SK-N-SH (cell line): ENCODE measurements at regions of chr2 and their contacts with region 1.

Region 1: GRCh38 chr2:205721057-205721449 is 38.8 kb downstream of the NRP2 start:
- DNase-seq: no peak
- H3K4me3 ChIP-seq: no peak overlapping the region
- H3K27ac ChIP-seq: no peak overlapping the region
- H3K4me1 ChIP-seq: peaks cover 3 to 10% of the 10 kb centered on the region in 2 experiments; a peak in 1 of 4 replicates
- H3K27me3 ChIP-seq: no peaks in the 10 kb centered on the region
- CTCF ChIP-seq: peak; percentile 52
- EP300 ChIP-seq: no peak
- RAD21 ChIP-seq: 0 out of 2 replicates have a peak, but pooled peaks have one; percentile 8

Region 2: DNA sequence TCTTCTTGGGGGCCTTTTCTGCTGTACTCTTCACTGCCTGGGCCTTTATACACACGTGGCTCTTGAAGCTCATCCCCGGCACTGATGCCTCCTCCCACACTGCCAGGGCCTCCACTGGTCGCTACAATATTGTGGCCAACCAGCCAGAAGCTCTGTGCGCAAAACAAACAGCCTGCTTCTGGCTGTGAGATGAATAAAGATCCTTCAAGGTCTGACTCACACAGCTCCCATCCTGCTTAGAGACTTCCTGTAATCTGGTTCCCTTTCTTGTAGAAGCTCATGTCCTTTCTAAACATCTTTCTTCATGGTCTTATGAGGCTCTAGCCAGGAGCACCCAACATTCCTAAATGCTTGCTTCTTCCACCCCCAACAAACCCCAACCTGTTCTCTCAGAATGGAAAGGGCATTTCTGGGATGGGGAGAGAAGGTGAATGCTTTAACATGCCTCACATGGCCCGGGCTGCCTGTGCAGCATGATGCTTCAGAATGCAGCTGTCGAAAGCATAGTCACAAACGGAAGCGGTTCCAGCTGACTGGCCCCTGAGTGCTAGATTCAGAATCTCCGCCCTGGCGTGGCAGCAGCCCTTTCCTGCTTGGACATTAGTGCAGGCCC is 14.2 kb before region 1 on chr2:
- CTCF ChIA-PET with region 1: interaction called, 18 read pairs
- POLR2A ChIA-PET with region 1: no interaction called
- DNase-seq: no peak
- H3K4me3 ChIP-seq: peak overlapping the region in 1 of 2 experiments; percentile 13; a peak in 1 of 4 replicates
- H3K27ac ChIP-seq: peak overlapping the region; percentile 36 to 87; a peak in 3 of 4 replicates
- H3K4me1 ChIP-seq: peaks cover 2 to 51% of the 10 kb centered on the region in 2 experiments; a peak in 3 of 4 replicates
- H3K27me3 ChIP-seq: no peaks in the 10 kb centered on the region
- CTCF ChIP-seq: no peak
- EP300 ChIP-seq: no peak; a peak in 1 of 4 replicates
- RAD21 ChIP-seq: no peak

Region 3: GRCh38 chr2:205734436-205735037 is 13.5 kb after region 1 on chr2:
- CTCF ChIA-PET with region 1: interaction called, 35 read pairs
- POLR2A ChIA-PET with region 1: no interaction called
- DNase-seq: peak; percentile 57
- H3K4me3 ChIP-seq: no peak overlapping the region
- H3K27ac ChIP-seq: peak overlapping the region; percentile 63 to 77
- H3K4me1 ChIP-seq: peaks cover 29 to 38% of the 10 kb centered on the region in 2 experiments; a peak in 3 of 4 replicates
- H3K27me3 ChIP-seq: no peaks in the 10 kb centered on the region
- CTCF ChIP-seq: no peak
- EP300 ChIP-seq: peak in 1 of 2 experiments; percentile 55; a peak in 1 of 4 replicates
- RAD21 ChIP-seq: no peak

Region 4: GRCh38 chr2:205746420-205746785 is 25.4 kb after region 1 on chr2:
- CTCF ChIA-PET with region 1: interaction called, 15 read pairs
- POLR2A ChIA-PET with region 1: interaction called, 3 read pairs
- DNase-seq: peak; percentile 71
- H3K4me3 ChIP-seq: no peak overlapping the region; a peak in 1 of 4 replicates
- H3K27ac ChIP-seq: peak overlapping the region in 1 of 2 experiments; percentile 95; a peak in 2 of 4 replicates
- H3K4me1 ChIP-seq: peaks cover 0 to 45% of the 10 kb centered on the region in 2 experiments; a peak in 1 of 4 replicates
- H3K27me3 ChIP-seq: no peaks in the 10 kb centered on the region
- CTCF ChIP-seq: no peak
- EP300 ChIP-seq: 0 out of 4 replicates have a peak, but pooled peaks of 1 of the 2 experiments have one; percentile 20
- RAD21 ChIP-seq: no peak; the same call in 1 of the 2 replicates